AG04449 (cell line): ENCODE measurements at regions of chr6 and their contacts with region 1.

Region 1: DNA sequence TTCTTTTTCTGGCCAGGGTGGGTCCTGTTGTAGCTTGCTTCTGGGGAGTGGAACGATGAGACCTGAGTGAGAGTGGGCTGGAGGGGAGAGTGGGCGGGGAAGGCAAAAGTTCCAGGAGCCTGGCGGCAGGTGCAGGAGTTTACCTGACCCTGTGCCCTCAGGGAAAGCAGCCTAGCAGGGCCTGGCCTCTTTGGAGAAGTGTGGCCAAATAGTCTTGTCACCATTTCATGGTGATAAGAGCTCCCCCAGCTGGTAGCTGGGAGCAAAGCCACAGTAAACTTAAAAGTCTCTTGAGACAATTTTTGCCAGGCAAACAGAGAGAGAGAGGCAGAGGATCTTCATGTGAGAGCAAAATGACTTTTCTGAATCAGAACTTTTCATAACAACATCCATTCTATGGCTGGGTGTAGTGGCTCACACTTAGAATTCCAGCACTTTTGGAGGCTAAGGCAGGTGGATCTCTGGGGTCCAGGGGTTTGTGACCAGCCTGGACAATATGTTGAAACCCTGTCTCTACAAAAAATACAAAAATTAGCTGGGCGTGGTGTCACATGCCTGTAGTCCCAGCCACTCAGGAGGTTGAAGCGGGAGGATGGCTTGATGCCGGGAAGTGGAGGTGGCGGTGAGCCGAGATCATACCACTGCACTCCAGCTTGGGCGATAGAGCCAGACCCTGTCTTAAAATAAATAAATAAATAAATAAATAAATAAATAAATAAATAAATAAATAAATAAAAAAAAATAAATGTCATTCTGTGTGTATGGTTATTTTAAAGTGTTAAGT is 161.8 kb upstream of the SCGN start:
- DNase-seq: no peak
- H3K4me3 ChIP-seq: no peak overlapping the region
- CTCF ChIP-seq: peak; percentile 76

Region 2: DNA sequence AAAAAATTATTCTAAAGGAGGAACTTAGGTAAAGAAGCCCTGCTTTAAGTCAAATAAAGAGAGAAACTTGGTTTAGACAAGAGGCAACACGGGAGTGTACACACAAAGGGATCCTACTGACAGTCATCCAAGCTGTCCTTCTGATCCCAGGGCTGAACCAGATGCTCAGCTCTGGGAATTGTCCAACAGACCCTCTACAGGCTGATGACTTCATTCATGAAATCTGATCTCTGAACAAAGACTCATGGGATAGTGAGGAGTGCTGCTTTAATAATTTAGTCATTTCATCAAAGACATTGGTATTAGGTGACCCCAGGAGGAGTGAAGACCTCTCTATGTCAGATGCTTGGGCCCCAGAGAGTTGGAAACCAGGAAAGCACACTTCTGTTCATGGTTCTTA is 625.9 kb before region 1 on chr6:
- CTCF ChIA-PET with region 1: no interaction called
- POLR2A ChIA-PET with region 1: no interaction called
- DNase-seq: no peak
- H3K4me3 ChIP-seq: no peak overlapping the region
- CTCF ChIP-seq: no peak

Region 3: DNA sequence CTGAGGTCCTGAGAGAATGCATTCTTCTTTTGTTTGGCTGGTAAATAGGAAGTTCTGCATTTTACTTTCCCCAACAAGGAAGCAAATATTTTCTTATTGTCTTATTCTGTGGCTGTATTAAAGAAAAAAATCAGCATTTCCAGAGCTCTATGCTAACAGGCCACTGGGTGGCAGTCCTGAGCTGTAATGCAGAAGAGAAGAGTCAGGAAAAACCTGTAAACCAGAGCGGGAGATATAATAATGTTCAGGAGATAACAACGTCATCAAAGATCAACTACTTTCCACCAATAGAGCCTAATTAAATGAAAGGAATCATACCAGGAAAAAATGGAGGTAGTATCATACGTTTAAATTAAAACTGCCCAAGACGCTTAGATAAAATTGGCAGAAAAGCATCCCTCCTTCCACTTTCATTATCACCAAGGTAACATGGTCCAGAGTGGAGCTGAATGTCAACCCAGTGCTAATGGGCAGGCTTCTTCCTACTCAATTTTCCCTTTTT is 266.7 kb before region 1 on chr6:
- CTCF ChIA-PET with region 1: interaction called, 15 read pairs
- POLR2A ChIA-PET with region 1: no interaction called
- DNase-seq: no peak
- H3K4me3 ChIP-seq: peak overlapping the region; percentile 23
- CTCF ChIP-seq: peak; percentile 72

Region 4: GRCh38 chr6:25278914-25279747 is 211.1 kb before region 1 on chr6 and contains the start of gene CARMIL1:
- CTCF ChIA-PET with region 1: interaction called, 119 read pairs
- POLR2A ChIA-PET with region 1: no interaction called
- DNase-seq: no peak
- H3K4me3 ChIP-seq: peak within 1 kb of the TSS; percentile 71
- CTCF ChIP-seq: peak; percentile 73

Region 5: GRCh38 chr6:25504661-25505060 is 14.5 kb after region 1 on chr6:
- CTCF ChIA-PET with region 1: interaction called, 48 read pairs
- POLR2A ChIA-PET with region 1: no interaction called
- DNase-seq: no peak
- H3K4me3 ChIP-seq: no peak overlapping the region
- CTCF ChIP-seq: no peak